Psoas muscle (tissue), 8 donors: ENCODE measurements at regions of chr12 and their contacts with region 1.

Region 1: DNA sequence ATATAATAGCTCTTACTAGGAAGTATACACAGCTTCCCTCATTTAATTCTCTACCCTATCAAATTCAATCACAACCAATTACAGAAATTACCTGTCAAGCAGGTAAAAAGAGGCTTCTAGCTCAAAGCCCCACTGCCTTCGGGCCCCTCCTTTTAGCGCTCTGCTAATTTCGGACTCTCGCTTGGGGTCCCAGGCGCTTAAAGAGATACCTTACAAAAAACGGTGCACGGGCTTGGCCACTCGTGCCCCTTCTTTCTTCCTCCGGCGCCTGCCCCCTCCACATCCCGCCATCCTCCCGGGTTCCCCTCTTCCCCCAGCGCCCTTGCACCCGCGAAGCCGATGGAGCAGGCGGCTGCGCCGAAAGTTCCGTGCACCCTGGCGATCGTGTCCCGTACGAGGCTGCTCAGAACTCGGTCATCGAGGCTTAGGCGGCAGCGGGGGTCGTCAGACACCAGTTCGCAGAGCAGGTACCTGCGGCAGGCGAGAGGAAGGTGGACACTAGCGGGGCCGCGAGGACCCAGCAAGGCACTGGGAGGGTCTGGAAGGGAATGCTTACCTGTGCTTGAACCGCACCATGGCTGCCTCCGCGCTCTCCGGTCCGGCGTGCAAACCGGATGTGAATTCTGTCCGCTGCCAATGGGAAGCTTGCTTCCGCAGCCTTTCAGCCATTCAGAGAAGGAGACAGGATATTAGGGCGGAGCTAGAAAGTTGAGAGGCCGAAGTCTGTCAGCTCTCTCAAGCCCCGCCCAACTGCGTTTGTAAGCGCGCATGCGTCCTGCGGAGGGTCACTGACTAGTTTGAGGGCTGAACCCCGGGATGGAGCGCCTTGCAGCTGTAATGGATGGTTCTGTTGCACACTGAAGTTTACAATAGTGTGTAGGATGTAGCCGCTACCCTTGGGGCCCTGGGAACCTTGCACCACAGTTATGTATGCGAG is at the start of gene POP5:
- DNase-seq: peak; percentile 96 to 98
- ATAC-seq: peak; percentile 89 to 94 (median 90)
- H3K4me3 ChIP-seq: peak within 1 kb of the TSS; percentile 88
- H3K27ac ChIP-seq: peak within 1 kb of the TSS; percentile 84
- H3K4me1 ChIP-seq: peaks cover 13% of the 10 kb centered on the region
- H3K27me3 ChIP-seq: no peaks in the 10 kb centered on the region
- CTCF ChIP-seq: no peak
- total RNA-seq, gene POP5: 9.8 to 20.2 (median 17.0) TPM

Region 2: GRCh38 chr12:118680356-118680963 is 1900.6 kb before region 1 on chr12:
- intact Hi-C with region 1: no loop called
- DNase-seq: no peak
- ATAC-seq: no peak
- H3K4me3 ChIP-seq: no peak overlapping the region
- H3K27ac ChIP-seq: no peak overlapping the region
- H3K4me1 ChIP-seq: no peaks in the 10 kb centered on the region
- H3K27me3 ChIP-seq: peaks cover 0 to 4% (median 0%) of the 10 kb centered on the region in 3 donors
- CTCF ChIP-seq: no peak

Region 3: DNA sequence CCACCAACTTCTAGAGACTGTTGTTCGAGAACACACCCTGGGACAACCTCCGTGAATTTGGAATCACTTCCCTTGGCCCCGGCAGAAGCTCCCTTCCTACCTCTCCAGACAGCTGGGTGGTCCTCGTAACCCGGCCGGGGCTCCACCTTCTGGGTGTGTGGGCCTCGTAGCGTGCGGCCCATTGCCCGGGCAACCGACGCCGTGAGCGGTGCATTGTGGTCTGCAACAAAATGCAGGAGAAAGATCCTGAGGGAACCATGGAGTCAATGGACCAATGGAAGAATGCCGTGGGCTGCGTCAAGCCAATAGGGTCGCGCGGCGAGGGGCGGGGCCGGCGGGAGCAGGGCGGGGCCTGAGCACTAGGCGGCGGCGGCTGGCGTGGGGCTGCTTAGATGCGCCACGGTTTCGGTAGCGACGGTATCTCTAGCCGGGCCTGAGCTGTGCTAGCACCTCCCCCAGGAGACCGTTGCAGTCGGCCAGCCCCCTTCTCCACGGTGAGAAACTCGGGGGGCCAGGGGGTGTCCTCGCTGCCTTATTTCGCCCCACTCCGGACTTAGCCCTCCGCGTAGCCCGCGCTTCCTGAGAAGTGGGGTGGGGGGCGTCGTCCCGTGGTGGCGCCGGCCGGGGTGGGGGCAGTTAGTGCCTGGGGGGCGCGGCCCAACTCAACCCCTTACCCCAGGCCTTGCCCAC is 85.2 kb before region 1 on chr12 and contains the start of gene DYNLL1:
- intact Hi-C with region 1: loop called in 1 of 2 experiments (anchors 5 kb)
- DNase-seq: peak; percentile 94 to 98
- ATAC-seq: peak; percentile 98 to 100 (median 99)
- H3K4me3 ChIP-seq: peak within 1 kb of the TSS; percentile 99
- H3K27ac ChIP-seq: peak within 1 kb of the TSS; percentile 80
- H3K4me1 ChIP-seq: peaks cover 27% of the 10 kb centered on the region
- H3K27me3 ChIP-seq: no peaks in the 10 kb centered on the region
- CTCF ChIP-seq: peak; percentile 9
- total RNA-seq, gene DYNLL1: 30.1 to 116 (median 68.2) TPM

Region 4: DNA sequence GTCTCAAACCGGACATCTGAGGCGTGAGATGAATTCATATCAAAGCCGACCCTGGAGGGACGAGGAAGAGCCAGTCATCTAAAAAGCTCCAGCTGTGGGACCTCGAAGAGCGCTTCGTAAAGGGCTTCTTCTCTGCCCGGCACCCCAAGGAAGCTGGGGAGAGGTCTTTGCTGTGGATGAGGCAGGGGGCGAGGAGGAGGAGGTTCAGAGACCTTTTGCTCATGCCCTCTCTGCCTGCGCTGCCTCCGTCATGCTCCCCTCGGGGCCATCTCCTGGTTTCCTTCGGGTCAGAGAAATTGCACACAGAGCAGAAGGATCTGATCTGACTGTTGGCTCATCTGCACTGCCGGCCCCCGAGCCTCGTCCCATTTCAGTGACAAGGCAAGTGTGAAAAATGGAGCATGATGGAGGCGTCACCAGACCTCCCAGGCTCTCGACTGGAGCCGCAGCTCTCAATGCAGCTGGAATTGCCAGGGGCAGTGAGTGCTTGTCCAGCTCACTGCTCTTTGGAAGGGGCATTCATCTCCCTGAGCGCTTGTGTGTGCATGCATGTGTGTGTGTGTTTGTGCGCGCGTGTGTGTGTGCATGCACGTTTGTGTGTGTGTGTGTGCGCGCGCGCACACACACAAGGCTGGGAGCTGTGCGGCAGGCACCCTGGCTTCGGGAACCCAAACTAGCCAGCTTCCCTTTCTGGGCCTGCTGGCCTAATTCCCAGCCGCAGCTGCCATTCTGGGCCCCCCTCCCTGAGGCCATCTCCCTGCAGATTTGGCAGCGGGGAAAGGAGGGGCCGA is 68.6 kb after region 1 on chr12:
- intact Hi-C with region 1: loop called (anchors 2 kb)
- DNase-seq: no peak
- ATAC-seq: no peak
- H3K4me3 ChIP-seq: peak overlapping the region; percentile 54
- H3K27ac ChIP-seq: peak overlapping the region; percentile 54
- H3K4me1 ChIP-seq: peaks cover 6% of the 10 kb centered on the region
- H3K27me3 ChIP-seq: peaks cover 0 to 22% (median 0%) of the 10 kb centered on the region in 3 donors
- CTCF ChIP-seq: no peak

Region 5: GRCh38 chr12:120710031-120710804 is 129.2 kb after region 1 on chr12 and contains the start of gene UNC119B:
- intact Hi-C with region 1: loop called (anchors 1 to 5 kb)
- DNase-seq: peak; percentile 72 to 82
- ATAC-seq: peak; percentile 86 to 91 (median 88)
- H3K4me3 ChIP-seq: peak within 1 kb of the TSS; percentile 92
- H3K27ac ChIP-seq: peak within 1 kb of the TSS; percentile 85
- H3K4me1 ChIP-seq: peaks cover 18% of the 10 kb centered on the region
- H3K27me3 ChIP-seq: no peaks in the 10 kb centered on the region
- CTCF ChIP-seq: no peak
- total RNA-seq, gene UNC119B: 7.5 to 10.9 (median 7.9) TPM

Region 6: DNA sequence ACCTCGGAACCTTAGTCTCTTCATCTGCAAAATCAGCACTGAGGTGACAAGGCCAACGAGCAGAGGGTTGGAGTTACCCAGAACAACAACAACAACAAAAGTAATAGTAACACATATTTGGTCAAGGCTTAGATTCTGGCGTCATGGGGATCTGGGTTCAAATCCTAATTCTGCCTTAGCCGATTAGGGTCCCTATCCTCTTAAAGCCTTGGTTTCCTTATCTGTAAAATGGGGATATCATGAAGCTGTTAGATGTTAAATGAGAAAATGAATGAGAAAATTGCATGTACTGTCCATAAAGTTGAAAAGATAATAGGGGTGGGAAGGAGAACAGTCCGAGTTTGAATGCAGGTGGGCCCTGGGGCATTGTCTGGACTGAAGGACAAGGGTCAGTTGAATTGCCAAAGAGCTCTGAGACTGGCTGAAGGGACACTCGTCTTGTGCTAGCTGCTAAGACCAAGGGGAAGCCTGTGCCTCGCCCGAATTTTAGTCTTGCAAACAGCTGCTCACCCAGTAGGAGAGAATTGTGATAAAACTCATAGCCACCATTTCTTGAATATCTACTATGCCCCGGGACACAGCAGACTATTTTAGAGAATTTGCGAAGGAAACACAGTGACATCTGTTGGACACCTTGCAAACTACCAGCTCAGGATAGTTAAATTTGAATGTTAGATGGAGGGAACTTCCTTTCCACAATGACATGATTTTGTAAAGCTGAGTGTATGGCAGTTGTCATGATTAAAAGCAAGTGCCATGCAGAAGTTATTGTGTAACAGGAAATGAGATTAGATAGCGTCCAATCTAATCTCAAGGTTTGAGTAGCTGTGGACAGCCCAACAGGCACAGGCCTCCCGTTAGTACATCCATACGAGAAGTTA is 390.5 kb after region 1 on chr12:
- intact Hi-C with region 1: loop called in 1 of 2 experiments (anchors 5 kb)
- DNase-seq: no peak
- ATAC-seq: peak; percentile 66 to 91 (median 80)
- H3K4me3 ChIP-seq: no peak overlapping the region
- H3K27ac ChIP-seq: no peak overlapping the region
- H3K4me1 ChIP-seq: no peaks in the 10 kb centered on the region
- H3K27me3 ChIP-seq: no peaks in the 10 kb centered on the region
- CTCF ChIP-seq: peak; percentile 76

Region 7: DNA sequence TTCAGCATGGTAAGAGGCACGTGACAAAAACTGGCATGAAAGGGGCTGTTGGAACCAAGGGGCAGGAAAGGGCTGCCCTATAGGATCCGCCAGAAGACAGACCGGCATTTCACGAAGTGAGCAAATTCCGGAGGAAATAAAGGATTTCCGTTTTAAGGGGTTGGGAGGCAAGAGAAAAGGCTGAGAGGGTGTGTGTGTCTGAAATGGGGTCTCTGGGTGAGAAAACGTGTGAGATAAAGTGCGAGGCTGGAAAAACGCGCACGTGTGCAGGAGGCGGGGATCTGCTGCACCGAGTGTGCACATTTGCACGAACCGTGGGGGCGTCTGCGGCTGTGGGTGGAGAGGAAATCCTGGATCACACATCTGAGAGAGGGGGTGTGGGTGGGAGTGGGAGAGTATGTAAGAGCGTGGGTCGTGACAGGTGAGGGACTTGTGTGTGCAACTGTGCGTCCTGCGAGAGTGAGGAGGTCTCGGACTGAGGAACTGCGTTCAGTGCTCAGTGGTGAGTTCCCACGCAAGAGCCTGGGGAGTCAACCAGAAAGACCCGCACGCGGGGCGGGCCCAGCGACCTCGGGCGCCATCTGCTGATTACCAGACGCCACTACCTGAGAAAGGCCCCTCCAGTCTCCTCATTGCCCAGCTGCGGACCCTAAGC is 514.6 kb after region 1 on chr12:
- intact Hi-C with region 1: loop called in 1 of 2 experiments (anchors 5 kb)
- DNase-seq: peak; percentile 60 to 80
- ATAC-seq: peak; percentile 66 to 88 (median 78)
- H3K4me3 ChIP-seq: peak overlapping the region; percentile 50
- H3K27ac ChIP-seq: no peak overlapping the region
- H3K4me1 ChIP-seq: no peaks in the 10 kb centered on the region
- H3K27me3 ChIP-seq: peaks cover 0 to 7% (median 3%) of the 10 kb centered on the region in 3 donors
- CTCF ChIP-seq: peak; percentile 73

Region 8: DNA sequence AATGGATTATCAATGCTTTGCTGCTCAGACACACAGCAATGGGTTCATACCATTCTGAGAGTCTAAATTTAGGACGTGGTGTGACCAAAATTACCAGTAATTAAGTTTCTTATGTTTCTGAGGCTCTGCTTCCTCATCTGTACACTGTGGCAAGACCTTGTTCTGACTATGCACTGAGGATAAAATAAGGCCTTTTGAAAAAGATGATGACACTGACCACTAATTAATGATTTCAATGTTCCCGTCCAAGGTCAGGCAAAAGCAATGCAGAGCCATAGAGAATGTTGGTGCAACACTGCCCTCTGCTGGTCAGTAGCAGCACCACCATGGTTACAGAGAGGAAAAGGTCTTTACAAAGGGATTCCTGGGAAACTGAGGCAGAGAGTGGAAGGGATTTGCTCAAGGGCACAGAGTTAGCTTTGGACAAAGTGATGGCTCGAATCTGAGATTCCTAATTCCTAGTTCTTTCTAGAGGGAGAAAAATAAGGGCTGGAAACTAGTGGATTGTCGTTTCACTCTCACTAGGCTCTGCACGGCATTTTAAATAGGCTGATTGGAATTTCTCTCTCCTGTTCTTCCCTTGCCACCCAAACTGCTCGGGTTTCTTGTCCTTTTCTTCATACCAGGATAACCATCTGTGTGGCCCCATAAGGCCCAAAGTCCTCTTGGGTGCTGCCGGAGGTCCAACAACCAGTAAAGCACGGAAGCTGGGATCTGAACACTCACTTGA is 529.3 kb after region 1 on chr12:
- intact Hi-C with region 1: loop called in 1 of 2 experiments (anchors 5 kb)
- DNase-seq: peak; percentile 43 to 61
- ATAC-seq: peak; percentile 58 to 85 (median 76)
- H3K4me3 ChIP-seq: no peak overlapping the region
- H3K27ac ChIP-seq: no peak overlapping the region
- H3K4me1 ChIP-seq: no peaks in the 10 kb centered on the region
- H3K27me3 ChIP-seq: no peaks in the 10 kb centered on the region
- CTCF ChIP-seq: peak; percentile 95